Cardiac septum (tissue), 1 donor: ENCODE measurements at regions of chrX and their contacts with region 1.

Region 1: GRCh38 chrX:130902783-130903613 is at the start of gene ENOX2:
- DNase-seq: peak; percentile 94
- total RNA-seq, gene ENOX2: 23.2 TPM

Region 2: DNA sequence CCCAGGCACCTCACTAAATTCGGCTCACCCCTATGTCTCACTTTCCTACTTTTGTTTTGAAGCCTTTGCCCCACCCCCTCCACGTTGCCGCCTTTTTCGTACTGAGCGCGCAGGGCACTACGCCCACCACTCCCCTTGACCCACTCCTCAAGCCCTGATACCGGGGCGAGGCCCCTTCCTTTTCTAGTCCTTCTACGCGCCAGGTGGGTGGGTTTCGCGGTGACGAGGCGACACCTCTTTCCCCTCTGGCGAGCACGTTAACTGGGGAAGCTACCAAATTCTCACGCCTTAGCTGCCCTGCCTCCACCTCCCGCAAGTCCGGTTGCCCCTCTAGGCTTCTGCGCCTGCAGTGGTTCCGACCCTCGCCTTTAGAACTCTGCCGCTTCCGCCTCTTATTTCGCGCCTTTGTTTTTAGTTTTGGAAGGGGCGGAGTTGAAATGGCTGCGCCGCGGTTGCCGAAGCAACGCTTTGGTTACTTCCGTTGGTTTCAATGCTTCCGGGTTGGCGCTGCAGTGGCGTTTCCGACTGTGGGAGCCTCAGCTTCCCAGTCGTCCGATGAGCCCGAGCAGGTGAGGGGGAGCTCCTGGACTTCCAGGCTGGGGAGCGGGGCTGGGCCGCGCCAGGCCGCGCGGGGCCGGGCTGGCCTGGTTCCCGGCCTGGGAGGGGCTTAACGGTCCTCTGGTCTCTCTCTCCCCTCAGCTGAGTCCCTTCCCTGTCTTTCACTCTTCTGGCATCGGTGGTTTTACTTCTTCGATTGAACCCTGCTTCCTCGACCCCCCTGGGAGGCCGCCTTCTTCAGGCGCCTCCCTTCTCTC is 563.4 kb before region 1 on chrX and contains the start of gene SLC25A14:
- intact Hi-C with region 1: loop called (anchors 10 kb)
- DNase-seq: peak; percentile 88
- total RNA-seq, gene SLC25A14: 6.0 TPM

Region 3: DNA sequence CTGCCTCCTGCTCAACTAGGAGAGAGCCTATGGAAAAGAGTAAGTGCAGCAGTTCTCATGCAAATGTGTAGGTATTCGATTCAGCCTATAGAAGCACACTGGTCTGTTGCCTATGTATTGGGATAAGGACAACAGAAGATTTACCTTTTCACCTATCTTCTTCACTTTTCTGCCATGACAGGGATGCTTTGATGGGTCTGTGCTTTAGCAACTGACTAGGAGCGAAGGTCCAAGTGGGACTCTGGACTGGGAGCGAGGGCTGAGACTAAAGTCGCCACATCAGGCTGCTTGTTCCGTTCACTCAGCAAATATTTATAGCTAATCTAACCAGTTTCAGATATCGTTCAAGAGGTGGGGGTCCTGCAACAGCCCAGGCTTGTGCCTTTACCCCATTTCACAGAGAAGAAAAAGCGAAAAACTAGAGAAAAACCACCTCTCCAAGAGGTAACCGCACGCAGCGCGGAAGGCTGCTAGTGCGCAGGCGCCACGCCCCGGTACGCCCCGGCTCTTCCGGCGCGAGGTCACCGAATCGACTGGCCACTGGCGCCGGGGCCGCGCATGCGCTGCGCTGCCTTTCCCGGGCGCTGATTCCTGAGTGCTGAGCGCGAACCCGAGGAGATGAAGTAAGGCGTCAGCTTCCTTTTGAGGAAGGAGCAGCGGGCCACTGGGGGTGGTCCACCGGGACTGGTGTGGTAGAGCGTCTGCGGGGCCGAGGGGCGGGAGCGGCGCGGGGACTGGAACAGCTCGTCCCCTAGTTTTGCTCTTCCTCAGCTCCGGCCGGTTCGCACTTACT is 501.4 kb before region 1 on chrX and contains the start of gene RBMX2:
- intact Hi-C with region 1: loop called (anchors 5 kb)
- DNase-seq: peak; percentile 89
- total RNA-seq, gene RBMX2: 13.3 TPM